A673 (cell line): ENCODE measurements at regions of chr19 and their contacts with region 1.

Region 1: GRCh38 chr19:46179076-46179759 is 31.2 kb downstream of the IGFL2 start:
- DNase-seq: no peak
- H3K4me3 ChIP-seq: no peak overlapping the region
- H3K27ac ChIP-seq: no peak overlapping the region
- H3K4me1 ChIP-seq: no peaks in the 10 kb centered on the region
- H3K27me3 ChIP-seq: no peaks in the 10 kb centered on the region
- CTCF ChIP-seq: no peak

Region 2: GRCh38 chr19:45847663-45848062 is 331.6 kb before region 1 on chr19:
- CTCF ChIA-PET with region 1: no interaction called
- POLR2A ChIA-PET with region 1: interaction called, 11 read pairs
- intact Hi-C with region 1: no loop called
- DNase-seq: no peak
- H3K4me3 ChIP-seq: no peak overlapping the region
- H3K27ac ChIP-seq: no peak overlapping the region
- H3K4me1 ChIP-seq: no peaks in the 10 kb centered on the region
- H3K27me3 ChIP-seq: no peaks in the 10 kb centered on the region
- CTCF ChIP-seq: no peak

Region 3: DNA sequence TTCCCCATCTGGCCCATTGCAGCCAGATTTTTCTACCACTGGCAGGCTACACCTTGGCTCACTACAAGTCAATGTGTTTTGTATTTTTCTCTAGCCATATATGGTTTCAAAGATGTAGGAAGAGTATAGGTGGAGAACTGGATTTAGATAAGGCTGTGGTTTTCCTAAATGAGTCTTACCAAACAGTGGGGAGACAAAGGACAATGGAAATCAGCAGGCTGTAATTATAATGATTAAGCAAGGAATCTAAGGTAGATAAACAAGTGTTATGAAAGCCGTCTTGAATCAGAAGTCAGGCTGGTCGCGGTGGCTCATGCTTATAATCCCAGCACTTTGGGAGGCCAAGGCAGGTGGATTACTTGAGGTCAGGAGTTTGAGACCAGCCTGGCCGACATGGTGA is 61.5 kb after region 1 on chr19:
- CTCF ChIA-PET with region 1: no interaction called
- POLR2A ChIA-PET with region 1: no interaction called
- intact Hi-C with region 1: no loop called
- DNase-seq: no peak
- H3K4me3 ChIP-seq: no peak overlapping the region
- H3K27ac ChIP-seq: no peak overlapping the region
- H3K4me1 ChIP-seq: peaks cover 1% of the 10 kb centered on the region
- H3K27me3 ChIP-seq: peaks cover 95% of the 10 kb centered on the region
- CTCF ChIP-seq: no peak

Region 4: DNA sequence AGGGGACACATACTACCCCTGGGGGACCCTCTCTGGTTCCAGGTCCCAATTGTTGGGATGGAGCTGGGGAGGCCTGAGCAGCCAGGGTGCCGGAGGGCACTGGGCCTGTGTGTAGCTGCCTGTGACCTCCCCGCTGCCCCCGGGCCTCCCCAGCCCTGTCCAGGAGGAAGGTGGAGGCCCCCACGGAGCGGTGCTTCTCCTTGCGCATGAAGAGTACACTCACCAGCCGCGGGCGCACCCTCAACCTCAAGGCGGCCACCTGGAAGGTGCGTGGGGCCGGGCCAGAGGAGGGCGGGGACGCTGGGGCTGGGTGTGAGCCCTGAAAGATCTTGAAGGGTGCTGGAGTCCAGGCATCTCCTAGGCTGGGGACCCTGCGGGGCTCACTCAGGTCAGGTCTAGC is 129.3 kb after region 1 on chr19:
- CTCF ChIA-PET with region 1: no interaction called
- POLR2A ChIA-PET with region 1: no interaction called
- intact Hi-C with region 1: no loop called
- DNase-seq: no peak
- H3K4me3 ChIP-seq: no peak overlapping the region
- H3K27ac ChIP-seq: no peak overlapping the region
- H3K4me1 ChIP-seq: peaks cover 1% of the 10 kb centered on the region
- H3K27me3 ChIP-seq: no peaks in the 10 kb centered on the region
- CTCF ChIP-seq: no peak